MCF 10A (cell line): ENCODE measurements at regions of chr9 and their contacts with region 1.

Region 1: DNA sequence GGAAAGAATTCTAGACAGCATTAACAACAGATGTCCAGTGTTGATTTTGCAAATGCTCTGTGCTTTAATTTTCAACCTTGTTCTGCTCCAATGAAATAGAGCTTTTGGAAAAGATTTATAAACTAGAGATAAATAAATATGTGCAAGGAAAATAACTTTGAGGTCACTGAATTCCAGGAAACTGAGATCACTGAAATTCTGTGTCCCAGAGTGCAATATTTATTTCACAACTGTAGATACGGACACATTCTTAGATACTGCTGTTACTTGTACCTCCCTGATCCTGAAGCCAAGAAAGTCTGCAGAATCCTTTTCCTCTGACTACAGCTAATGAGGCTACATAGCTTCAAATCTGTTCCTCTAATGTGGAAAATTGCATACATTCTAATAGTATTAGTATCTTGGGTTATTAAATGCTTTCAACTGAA is 222.9 kb downstream of the DOCK8 start:
- DNase-seq: peak; percentile 43
- H3K4me3 Mint-ChIP-seq: no peak overlapping the region
- H3K27ac Mint-ChIP-seq: peak overlapping the region; percentile 92
- H3K4me1 Mint-ChIP-seq: peaks cover 35% of the 10 kb centered on the region
- H3K27me3 Mint-ChIP-seq: no peaks in the 10 kb centered on the region
- CTCF ChIP-seq: no peak

Region 2: GRCh38 chr9:419571-420402 is 17.8 kb before region 1 on chr9:
- CTCF ChIA-PET with region 1: interaction called, 3 read pairs
- POLR2A ChIA-PET with region 1: interaction called, 34 read pairs
- intact Hi-C with region 1: no loop called
- DNase-seq: peak; percentile 46
- H3K4me3 Mint-ChIP-seq: peak overlapping the region; percentile 2
- H3K27ac Mint-ChIP-seq: peak overlapping the region; percentile 86
- H3K4me1 Mint-ChIP-seq: peaks cover 19% of the 10 kb centered on the region
- H3K27me3 Mint-ChIP-seq: no peaks in the 10 kb centered on the region
- CTCF ChIP-seq: no peak

Region 3: DNA sequence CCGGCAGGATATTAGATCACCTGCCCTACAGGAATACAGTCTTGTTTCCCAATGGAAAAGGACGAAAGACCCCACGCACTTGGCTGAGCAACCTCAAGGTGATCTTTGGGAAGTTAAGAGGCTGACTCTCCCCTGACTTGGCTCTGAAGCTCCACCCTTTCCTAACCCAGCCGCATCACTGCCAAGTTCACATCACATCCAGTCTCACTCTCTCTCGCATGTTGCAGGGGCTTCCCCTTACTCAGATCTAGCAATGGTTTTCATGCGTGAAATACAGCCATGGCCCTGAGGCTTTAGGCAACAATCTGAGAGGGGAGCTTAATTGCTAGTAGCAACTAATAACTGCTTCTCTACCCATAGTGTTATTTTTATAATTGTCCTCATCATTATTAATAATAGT is 11.3 kb before region 1 on chr9:
- CTCF ChIA-PET with region 1: interaction called, 3 read pairs
- POLR2A ChIA-PET with region 1: interaction called, 24 read pairs
- intact Hi-C with region 1: no loop called
- DNase-seq: no peak
- H3K4me3 Mint-ChIP-seq: no peak overlapping the region
- H3K27ac Mint-ChIP-seq: no peak overlapping the region
- H3K4me1 Mint-ChIP-seq: no peaks in the 10 kb centered on the region
- H3K27me3 Mint-ChIP-seq: no peaks in the 10 kb centered on the region
- CTCF ChIP-seq: no peak

Region 4: GRCh38 chr9:469672-470551 is 32.3 kb after region 1 on chr9:
- CTCF ChIA-PET with region 1: interaction called, 4 read pairs
- POLR2A ChIA-PET with region 1: interaction called, 15 read pairs
- intact Hi-C with region 1: no loop called
- DNase-seq: peak; percentile 91
- H3K4me3 Mint-ChIP-seq: peak overlapping the region; percentile 87
- H3K27ac Mint-ChIP-seq: peak overlapping the region; percentile 86
- H3K4me1 Mint-ChIP-seq: peaks cover 22% of the 10 kb centered on the region
- H3K27me3 Mint-ChIP-seq: no peaks in the 10 kb centered on the region
- CTCF ChIP-seq: no peak

Region 5: GRCh38 chr9:479976-480375 is 42.4 kb after region 1 on chr9:
- CTCF ChIA-PET with region 1: no interaction called
- POLR2A ChIA-PET with region 1: no interaction called
- intact Hi-C with region 1: no loop called
- DNase-seq: no peak
- H3K4me3 Mint-ChIP-seq: no peak overlapping the region
- H3K27ac Mint-ChIP-seq: no peak overlapping the region
- H3K4me1 Mint-ChIP-seq: no peaks in the 10 kb centered on the region
- H3K27me3 Mint-ChIP-seq: no peaks in the 10 kb centered on the region
- CTCF ChIP-seq: no peak

Region 6: DNA sequence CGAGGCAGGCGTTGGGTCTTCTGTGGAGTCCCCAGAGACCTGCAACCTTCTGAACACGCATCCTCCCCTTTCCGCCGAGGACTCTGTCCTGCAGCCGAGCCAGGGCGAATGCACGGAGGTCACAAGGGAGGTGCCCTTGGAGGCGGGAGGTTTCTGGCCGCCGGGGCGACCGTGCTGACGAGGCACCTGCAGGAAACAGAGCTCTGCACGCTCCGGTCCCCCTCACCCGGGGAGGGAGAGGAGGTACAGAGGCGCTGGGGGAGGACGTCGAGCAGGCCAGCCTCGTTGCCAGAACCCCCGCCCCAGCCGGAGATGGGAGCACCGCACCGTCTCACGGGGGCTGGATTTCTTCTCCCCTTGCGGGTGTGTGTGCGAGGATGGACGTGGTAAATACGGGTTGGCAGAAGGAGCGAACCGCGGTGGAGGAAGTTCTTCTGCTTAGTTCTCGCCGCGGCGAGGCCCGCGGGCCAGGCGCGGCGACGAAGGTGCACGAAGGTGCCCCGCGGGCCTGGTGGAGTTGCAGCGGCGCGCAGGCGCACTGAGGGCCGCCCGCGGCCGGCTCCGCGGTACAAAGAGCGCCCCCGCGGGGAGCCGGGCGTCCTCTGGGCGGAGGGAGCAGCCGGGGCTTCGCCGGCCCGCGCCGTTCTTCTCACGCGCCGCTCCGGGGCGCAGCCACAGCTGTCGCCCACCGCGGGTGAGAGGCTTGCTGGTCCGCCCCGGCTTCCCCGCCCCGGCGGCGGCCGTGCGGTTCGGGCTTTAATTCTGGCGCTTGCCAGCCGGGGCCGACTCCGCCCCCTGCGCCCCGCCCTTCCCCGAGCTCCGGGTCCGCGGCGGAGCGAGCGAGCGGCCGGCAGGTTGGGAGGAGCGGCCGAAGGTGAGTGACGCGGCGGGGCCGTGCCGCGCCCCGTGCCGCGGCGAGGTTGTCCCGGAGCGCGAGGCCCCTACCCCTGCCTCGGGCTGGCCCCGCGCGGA is 66.6 kb after region 1 on chr9:
- CTCF ChIA-PET with region 1: interaction called, 4 read pairs
- POLR2A ChIA-PET with region 1: interaction called, 7 read pairs
- intact Hi-C with region 1: loop called (anchors 2 kb)
- DNase-seq: peak; percentile 82
- H3K4me3 Mint-ChIP-seq: peak within 1 kb of the TSS; percentile 82
- H3K27ac Mint-ChIP-seq: peak within 1 kb of the TSS; percentile 37
- H3K4me1 Mint-ChIP-seq: peaks cover 18% of the 10 kb centered on the region
- H3K27me3 Mint-ChIP-seq: no peaks in the 10 kb centered on the region
- CTCF ChIP-seq: peak; percentile 21